Sigmoid colon (tissue), 7 donors: ENCODE measurements at regions of chr5 and their contacts with region 1.

Region 1: DNA sequence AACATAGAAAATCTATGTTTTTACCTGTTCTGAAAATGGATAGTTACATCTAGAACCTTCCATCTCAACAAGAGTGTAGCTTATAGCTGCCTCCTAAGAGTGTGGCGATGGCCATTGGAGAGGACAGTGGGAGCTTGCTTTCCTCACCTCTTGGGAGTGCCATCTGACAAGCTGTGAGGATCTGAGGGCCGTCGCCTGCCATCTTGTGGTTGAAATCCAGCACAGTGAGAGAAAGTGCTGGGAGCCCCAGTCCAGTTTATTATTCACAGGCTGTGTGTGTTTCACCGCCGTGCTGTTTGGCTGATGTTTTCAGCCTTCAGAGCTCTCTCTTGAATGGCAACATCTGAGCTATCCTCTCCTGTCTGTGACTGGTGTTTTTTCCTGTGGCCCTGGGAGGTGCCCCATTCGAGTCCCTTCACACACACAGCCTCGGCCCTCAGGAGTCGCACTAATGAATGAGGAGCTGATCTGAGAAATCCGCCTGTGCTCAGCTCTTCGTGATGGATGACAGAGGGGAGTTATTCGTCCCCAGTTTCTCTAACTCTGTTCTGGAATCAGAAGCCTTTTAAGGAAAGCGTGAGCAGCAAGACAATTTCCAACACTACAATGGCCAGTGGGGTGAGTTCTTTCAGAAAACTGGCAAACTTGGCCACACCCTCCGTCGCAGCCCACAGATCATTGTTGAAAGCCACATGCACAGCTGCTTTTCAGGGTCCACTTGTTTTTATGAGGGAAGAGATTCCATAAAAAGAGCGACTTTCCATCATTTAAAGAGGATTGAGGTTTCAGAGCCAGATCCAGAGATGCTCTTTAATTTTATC is 170.3 kb downstream of the PDZD2 start:
- DNase-seq: peak; percentile 80
- H3K4me3 ChIP-seq: no peak overlapping the region
- H3K27ac ChIP-seq: no peak overlapping the region
- H3K4me1 ChIP-seq: no peaks in the 10 kb centered on the region
- H3K27me3 ChIP-seq: no peaks in the 10 kb centered on the region
- CTCF ChIP-seq: peak; percentile 27 to 64 (median 52)
- EP300 ChIP-seq: no peak
- POLR2A ChIP-seq: no peak

Region 2: GRCh38 chr5:31581498-31582099 is 227.7 kb before region 1 on chr5:
- intact Hi-C with region 1: loop called (anchors 2 kb)
- DNase-seq: no peak
- H3K4me3 ChIP-seq: no peak overlapping the region
- H3K27ac ChIP-seq: no peak overlapping the region
- H3K4me1 ChIP-seq: no peaks in the 10 kb centered on the region
- H3K27me3 ChIP-seq: no peaks in the 10 kb centered on the region
- CTCF ChIP-seq: peak in 2 of 4 experiments; percentile 23
- EP300 ChIP-seq: no peak
- POLR2A ChIP-seq: no peak